ENCODE measurements at regions of chr7 and their contacts with region 1.

Region 1: DNA sequence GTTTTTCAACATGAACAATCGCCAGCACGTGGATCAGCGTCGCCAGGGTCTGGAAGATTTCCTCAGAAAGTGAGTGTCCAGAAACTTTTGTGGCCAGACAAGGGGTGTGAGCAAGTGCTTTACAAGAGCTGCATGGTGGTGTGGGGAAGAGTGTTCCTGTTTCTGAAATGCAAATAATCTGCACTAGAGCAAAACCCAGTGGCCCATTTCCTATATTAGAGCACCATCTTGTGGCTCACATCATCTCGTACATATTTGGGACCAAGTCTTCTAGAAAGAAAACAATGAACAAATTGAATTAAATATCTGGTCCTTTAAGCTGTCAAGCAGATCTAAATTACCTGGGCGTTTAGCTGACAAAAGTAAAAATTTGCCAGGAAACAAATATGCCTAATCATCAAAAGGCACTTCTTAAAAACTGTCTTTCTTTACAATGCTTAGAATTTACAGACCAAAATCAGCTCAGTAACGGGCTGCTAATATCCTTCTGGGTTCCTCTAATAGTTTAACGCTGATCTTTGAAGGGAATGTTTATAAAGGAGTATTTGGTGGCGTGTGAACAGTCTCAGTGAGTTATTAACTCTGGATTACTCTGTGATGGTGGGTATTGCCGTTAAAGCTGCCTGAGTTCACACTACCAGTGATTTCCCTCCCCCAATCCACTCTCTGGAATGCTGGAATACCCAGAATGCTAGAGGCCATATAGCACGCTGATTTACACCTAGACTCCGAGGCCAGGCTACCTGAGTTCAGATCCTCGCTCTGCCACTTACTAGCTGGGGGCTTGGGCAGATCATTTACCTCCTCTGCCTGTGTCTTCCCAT is 73.6 kb downstream of the SNX10 start:
- DNase-seq: peak; percentile 59
- ATAC-seq: peak; percentile 80
- H3K4me3 Mint-ChIP-seq: no peak overlapping the region
- H3K27ac Mint-ChIP-seq: no peak overlapping the region
- H3K4me1 Mint-ChIP-seq: peaks cover 11% of the 10 kb centered on the region
- H3K27me3 Mint-ChIP-seq: no peaks in the 10 kb centered on the region
- CTCF ChIP-seq: peak; percentile 70

Region 2: GRCh38 chr7:25894902-25895791 is 470.1 kb before region 1 on chr7:
- CTCF ChIA-PET with region 1: interaction called, 41 read pairs
- POLR2A ChIA-PET with region 1: interaction called, 3 read pairs
- intact Hi-C with region 1: loop called (anchors 5 kb)
- DNase-seq: peak; percentile 72
- ATAC-seq: peak; percentile 71
- H3K4me3 Mint-ChIP-seq: peak overlapping the region; percentile 4
- H3K27ac Mint-ChIP-seq: no peak overlapping the region
- H3K4me1 Mint-ChIP-seq: peaks cover 27% of the 10 kb centered on the region
- H3K27me3 Mint-ChIP-seq: peaks cover 8% of the 10 kb centered on the region
- CTCF ChIP-seq: peak; percentile 73

Region 3: DNA sequence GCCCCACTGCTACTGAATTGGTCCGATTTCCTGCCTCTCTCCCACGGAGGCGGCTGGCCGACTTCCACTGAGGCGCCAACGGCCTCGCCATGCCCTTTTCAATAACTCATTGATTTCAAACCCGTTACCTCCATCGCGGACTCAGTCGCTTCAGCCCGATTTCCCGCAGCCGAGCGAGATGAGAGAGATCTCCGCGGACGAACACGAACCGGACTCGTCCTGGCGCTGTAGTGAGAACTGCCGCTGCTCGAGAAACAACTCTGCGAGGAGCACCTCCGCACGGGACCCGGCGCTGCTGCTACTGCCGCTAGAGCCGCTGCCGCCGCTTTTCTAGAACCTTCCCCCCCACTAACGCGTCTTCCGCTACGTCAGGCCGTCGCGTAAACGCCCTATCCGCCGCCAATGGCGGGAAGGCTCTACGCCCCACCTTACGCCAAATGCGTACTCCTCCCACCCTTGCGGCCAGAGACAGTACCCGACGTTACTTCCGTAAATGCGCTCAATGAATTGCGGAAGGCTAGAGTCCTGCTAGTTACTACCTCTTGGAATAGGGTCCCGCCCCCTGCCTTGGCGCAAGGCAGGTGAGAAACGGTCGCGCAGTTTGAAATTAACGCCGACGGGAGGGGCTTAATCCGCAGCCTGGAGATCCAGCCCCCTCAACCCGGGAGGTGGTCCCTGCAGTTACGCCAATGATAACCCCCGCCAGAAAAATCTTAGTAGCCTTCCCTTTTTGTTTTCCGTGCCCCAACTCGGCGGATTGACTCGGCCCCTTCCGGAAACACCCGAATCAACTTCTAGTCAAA is 164.6 kb before region 1 on chr7 and contains the start of gene HNRNPA2B1:
- CTCF ChIA-PET with region 1: interaction called, 6 read pairs
- POLR2A ChIA-PET with region 1: interaction called, 5 read pairs
- intact Hi-C with region 1: loop called (anchors 10 kb)
- DNase-seq: peak; percentile 98
- ATAC-seq: peak; percentile 73
- H3K4me3 Mint-ChIP-seq: peak within 1 kb of the TSS; percentile 100
- H3K27ac Mint-ChIP-seq: peak within 1 kb of the TSS; percentile 100
- H3K4me1 Mint-ChIP-seq: peaks cover 32% of the 10 kb centered on the region
- H3K27me3 Mint-ChIP-seq: peaks cover 3% of the 10 kb centered on the region
- CTCF ChIP-seq: no peak
- total RNA-seq, gene HNRNPA2B1: 871 to 893 TPM

Region 4: GRCh38 chr7:26291699-26292538 is 73.4 kb before region 1 on chr7 and contains the start of gene SNX10:
- CTCF ChIA-PET with region 1: interaction called, 12 read pairs
- POLR2A ChIA-PET with region 1: interaction called, 4 read pairs
- intact Hi-C with region 1: loop called (anchors 5 kb)
- DNase-seq: peak; percentile 77
- ATAC-seq: peak; percentile 69
- H3K4me3 Mint-ChIP-seq: peak within 1 kb of the TSS; percentile 96
- H3K27ac Mint-ChIP-seq: peak within 1 kb of the TSS; percentile 91
- H3K4me1 Mint-ChIP-seq: peaks cover 28% of the 10 kb centered on the region
- H3K27me3 Mint-ChIP-seq: no peaks in the 10 kb centered on the region
- CTCF ChIP-seq: no peak
- total RNA-seq, gene SNX10: 47.8 to 51.1 TPM

Region 5: GRCh38 chr7:26376175-26376917 is 11.1 kb after region 1 on chr7:
- CTCF ChIA-PET with region 1: interaction called, 19 read pairs
- POLR2A ChIA-PET with region 1: no interaction called
- intact Hi-C with region 1: no loop called
- DNase-seq: peak; percentile 65
- ATAC-seq: peak; percentile 8
- H3K4me3 Mint-ChIP-seq: peak overlapping the region; percentile 71
- H3K27ac Mint-ChIP-seq: no peak overlapping the region
- H3K4me1 Mint-ChIP-seq: peaks cover 6% of the 10 kb centered on the region
- H3K27me3 Mint-ChIP-seq: peaks cover 19% of the 10 kb centered on the region
- CTCF ChIP-seq: no peak

Region 6: GRCh38 chr7:26500749-26501352 is 135.6 kb after region 1 on chr7:
- CTCF ChIA-PET with region 1: interaction called, 11 read pairs
- POLR2A ChIA-PET with region 1: no interaction called
- intact Hi-C with region 1: no loop called
- DNase-seq: no peak
- ATAC-seq: peak; percentile 58
- H3K4me3 Mint-ChIP-seq: no peak overlapping the region
- H3K27ac Mint-ChIP-seq: no peak overlapping the region
- H3K4me1 Mint-ChIP-seq: no peaks in the 10 kb centered on the region
- H3K27me3 Mint-ChIP-seq: peaks cover 6% of the 10 kb centered on the region
- CTCF ChIP-seq: peak; percentile 50

Region 7: GRCh38 chr7:27160546-27161213 is 795.4 kb after region 1 on chr7:
- CTCF ChIA-PET with region 1: interaction called, 16 read pairs
- POLR2A ChIA-PET with region 1: no interaction called
- intact Hi-C with region 1: no loop called
- DNase-seq: peak; percentile 89
- ATAC-seq: peak; percentile 78
- H3K4me3 Mint-ChIP-seq: peak overlapping the region; percentile 59
- H3K27ac Mint-ChIP-seq: no peak overlapping the region
- H3K4me1 Mint-ChIP-seq: peaks cover 27% of the 10 kb centered on the region
- H3K27me3 Mint-ChIP-seq: peaks cover 79% of the 10 kb centered on the region
- CTCF ChIP-seq: peak; percentile 98